PC-3 (cell line): ENCODE measurements at regions of chr1 and their contacts with region 1.

Region 1: GRCh38 chr1:220217383-220217988 is 54.8 kb downstream of the RAB3GAP2 start:
- DNase-seq: peak; percentile 68
- ATAC-seq: peak; percentile 77
- H3K4me3 ChIP-seq: no peak overlapping the region
- H3K27ac ChIP-seq: no peak overlapping the region
- H3K4me1 ChIP-seq: no peaks in the 10 kb centered on the region
- H3K27me3 ChIP-seq: no peaks in the 10 kb centered on the region
- CTCF ChIP-seq: peak; percentile 94

Region 2: GRCh38 chr1:220189750-220190347 is 27.6 kb before region 1 on chr1:
- CTCF ChIA-PET with region 1: interaction called, 5 read pairs
- POLR2A ChIA-PET with region 1: no interaction called
- intact Hi-C with region 1: loop called (anchors 1 kb)
- DNase-seq: peak; percentile 58
- ATAC-seq: peak; percentile 48
- H3K4me3 ChIP-seq: no peak overlapping the region
- H3K27ac ChIP-seq: no peak overlapping the region
- H3K4me1 ChIP-seq: no peaks in the 10 kb centered on the region
- H3K27me3 ChIP-seq: no peaks in the 10 kb centered on the region
- CTCF ChIP-seq: peak; percentile 77

Region 3: GRCh38 chr1:220272047-220272840 is 54.8 kb after region 1 on chr1 and contains the start of gene RAB3GAP2:
- CTCF ChIA-PET with region 1: interaction called, 10 read pairs
- POLR2A ChIA-PET with region 1: interaction called, 10 read pairs
- intact Hi-C with region 1: loop called (anchors 1 kb)
- DNase-seq: peak; percentile 96
- ATAC-seq: peak; percentile 87
- H3K4me3 ChIP-seq: peak within 1 kb of the TSS; percentile 97
- H3K27ac ChIP-seq: peak within 1 kb of the TSS; percentile 42
- H3K4me1 ChIP-seq: peaks cover 21% of the 10 kb centered on the region
- H3K27me3 ChIP-seq: 0 out of 2 replicates have a peak, but pooled peaks cover under 1% of the 10 kb centered on the region
- CTCF ChIP-seq: no peak
- total RNA-seq, gene RAB3GAP2: 16.7 and 19.9 TPM in 2 replicates

Region 4: DNA sequence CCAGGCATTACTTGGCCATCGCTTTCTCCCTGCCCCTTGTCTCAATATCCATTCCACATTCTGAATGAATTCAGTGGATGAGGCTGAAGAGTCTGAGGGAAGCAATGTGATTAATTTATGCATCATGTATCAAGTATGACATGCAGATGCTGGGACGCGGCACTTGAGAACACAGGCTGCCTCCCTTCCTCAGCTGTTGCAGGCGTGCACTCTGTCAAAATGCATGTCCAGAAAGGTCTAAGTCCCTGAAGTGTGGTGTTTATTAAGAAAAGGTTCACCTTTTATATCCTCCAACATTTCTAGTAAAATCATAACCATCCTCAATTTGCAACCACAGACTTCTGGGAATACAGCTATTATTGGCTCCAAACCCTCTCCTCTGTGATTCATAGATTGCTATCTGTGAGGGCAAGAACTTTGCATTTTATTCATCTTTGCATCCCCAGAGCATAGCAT is 77.4 kb after region 1 on chr1:
- CTCF ChIA-PET with region 1: interaction called, 7 read pairs
- POLR2A ChIA-PET with region 1: no interaction called
- intact Hi-C with region 1: loop called (anchors 1 kb)
- DNase-seq: peak; percentile 33
- ATAC-seq: no peak
- H3K4me3 ChIP-seq: no peak overlapping the region
- H3K27ac ChIP-seq: no peak overlapping the region
- H3K4me1 ChIP-seq: no peaks in the 10 kb centered on the region
- H3K27me3 ChIP-seq: peaks cover 45% of the 10 kb centered on the region
- CTCF ChIP-seq: no peak

Region 5: DNA sequence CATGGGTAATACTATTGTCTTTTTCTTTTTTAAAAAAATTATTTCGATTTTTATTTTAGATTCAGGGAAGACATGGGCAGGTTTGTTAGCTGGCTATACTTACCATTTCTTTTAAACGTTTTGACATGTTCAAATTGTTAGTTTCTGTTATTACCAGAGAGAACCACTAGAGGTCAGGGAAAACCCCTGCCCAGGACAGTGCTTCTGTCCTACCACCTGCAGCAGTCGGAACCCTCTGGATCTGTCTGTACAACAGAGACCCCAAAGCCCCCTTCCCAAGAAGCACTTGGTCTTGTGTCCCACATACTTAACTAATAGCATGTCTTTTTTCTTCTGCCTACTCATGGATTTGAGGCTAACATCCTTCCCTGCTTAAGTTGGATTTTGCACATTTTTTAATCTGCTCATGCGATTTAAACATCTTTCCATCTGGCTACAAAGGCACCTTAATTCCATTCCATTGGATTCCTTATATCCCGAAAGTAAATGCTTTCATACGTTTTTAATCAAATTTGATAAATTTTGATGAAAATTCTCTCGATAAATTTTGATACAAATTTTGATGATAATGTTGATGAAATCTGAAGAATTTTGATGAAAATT is 462.7 kb after region 1 on chr1:
- CTCF ChIA-PET with region 1: interaction called, 3 read pairs
- POLR2A ChIA-PET with region 1: no interaction called
- intact Hi-C with region 1: loop called (anchors 5 kb)
- DNase-seq: peak; percentile 73
- ATAC-seq: peak; percentile 82
- H3K4me3 ChIP-seq: no peak overlapping the region
- H3K27ac ChIP-seq: no peak overlapping the region
- H3K4me1 ChIP-seq: peaks cover 13% of the 10 kb centered on the region
- H3K27me3 ChIP-seq: no peaks in the 10 kb centered on the region
- CTCF ChIP-seq: peak; percentile 81